Activated CD8-positive, alpha-beta memory T cell treated with anti-CD3 and anti-CD28 coated beads, Interleukin-2, amount 10 ng/mL, durations not matched to agents 7 days and 5 days (primary cell): ENCODE measurements at regions of chr19 and their contacts with region 1.

Region 1: GRCh38 chr19:47863514-47863936 is 4.5 kb downstream of the TPRX2 start:
- DNase-seq: peak; percentile 85
- ATAC-seq: peak; percentile 89
- H3K4me3 Mint-ChIP-seq: no peak overlapping the region
- H3K27ac Mint-ChIP-seq: no peak overlapping the region
- H3K4me1 Mint-ChIP-seq: no peaks in the 10 kb centered on the region
- H3K27me3 Mint-ChIP-seq: peaks cover 6% of the 10 kb centered on the region

Region 2: GRCh38 chr19:47805313-47805712 is 58.2 kb before region 1 on chr19:
- CTCF ChIA-PET with region 1: no interaction called
- DNase-seq: no peak
- ATAC-seq: no peak
- H3K4me3 Mint-ChIP-seq: no peak overlapping the region
- H3K27ac Mint-ChIP-seq: no peak overlapping the region
- H3K4me1 Mint-ChIP-seq: no peaks in the 10 kb centered on the region
- H3K27me3 Mint-ChIP-seq: peaks cover 3% of the 10 kb centered on the region

Region 3: DNA sequence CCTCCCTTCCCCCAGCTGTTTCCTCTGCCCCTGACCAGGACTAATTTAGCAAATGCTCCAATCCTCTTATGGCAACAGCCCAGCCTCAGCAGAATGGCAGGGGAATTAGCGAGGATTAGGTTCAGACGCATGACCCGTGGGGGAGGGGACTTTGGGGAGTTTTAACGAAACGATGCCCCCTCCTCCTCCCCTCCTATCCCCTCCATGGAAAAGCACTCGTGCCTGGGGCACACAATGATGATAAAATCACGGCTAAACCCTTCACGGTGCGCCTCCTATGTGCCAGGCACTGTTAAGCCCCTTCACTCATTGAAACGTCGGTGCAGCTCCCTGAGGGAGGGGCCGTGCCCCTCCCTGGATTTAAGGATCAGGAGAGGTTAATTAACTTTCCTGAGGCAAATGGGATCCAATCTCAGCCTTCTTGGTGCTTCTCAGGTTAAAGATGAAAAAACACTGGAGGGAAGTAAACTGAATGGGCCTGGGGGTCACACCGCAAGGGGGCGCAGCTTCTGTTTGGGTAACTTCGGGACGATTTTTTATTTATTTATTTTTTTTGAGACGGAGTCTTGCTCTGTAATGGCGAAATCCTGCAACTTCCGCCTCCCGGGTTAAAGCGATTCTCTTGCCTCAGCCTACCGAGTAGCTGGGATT is 14.6 kb before region 1 on chr19:
- CTCF ChIA-PET with region 1: interaction called, 11 read pairs
- DNase-seq: peak; percentile 46
- ATAC-seq: no peak
- H3K4me3 Mint-ChIP-seq: no peak overlapping the region
- H3K27ac Mint-ChIP-seq: no peak overlapping the region
- H3K4me1 Mint-ChIP-seq: peaks cover 5% of the 10 kb centered on the region
- H3K27me3 Mint-ChIP-seq: peaks cover 30% of the 10 kb centered on the region